GM13976 (cell line): ENCODE measurements at regions of chr10 and their contacts with region 1.

Region 1: GRCh38 chr10:60032723-60033122 is 126.4 kb upstream of the CCDC6 start:
- DNase-seq: peak; percentile 63
- CTCF ChIP-seq: peak; percentile 54

Region 2: GRCh38 chr10:59865101-59865500 is 167.6 kb before region 1 on chr10:
- in situ Hi-C with region 1: loop called (anchors 25 kb)
- DNase-seq: no peak
- CTCF ChIP-seq: peak; percentile 44